Caco-2 (cell line): ENCODE measurements at regions of chr14 and their contacts with region 1.

Region 1: GRCh38 chr14:55416866-55417265 is 5.2 kb upstream of the ATG14 start:
- DNase-seq: peak in 1 of 2 experiments; percentile 33
- H3K4me3 ChIP-seq: no peak overlapping the region
- H3K4me3 Mint-ChIP-seq: no peak overlapping the region
- H3K27ac Mint-ChIP-seq: no peak overlapping the region
- H3K4me1 ChIP-seq: peaks cover 6% of the 10 kb centered on the region; the same call in 1 of the 2 replicates
- H3K4me1 Mint-ChIP-seq: no peaks in the 10 kb centered on the region
- H3K27me3 ChIP-seq: no peaks in the 10 kb centered on the region
- H3K27me3 Mint-ChIP-seq: no peaks in the 10 kb centered on the region
- CTCF ChIP-seq: peak; percentile 22 to 51

Region 2: GRCh38 chr14:55301437-55302121 is 115.3 kb before region 1 on chr14:
- CTCF ChIA-PET with region 1: interaction called, 11 read pairs
- POLR2A ChIA-PET with region 1: no interaction called
- intact Hi-C with region 1: no loop called
- DNase-seq: no peak
- H3K4me3 ChIP-seq: no peak overlapping the region
- H3K4me3 Mint-ChIP-seq: no peak overlapping the region
- H3K27ac Mint-ChIP-seq: peak overlapping the region; percentile 48
- H3K4me1 ChIP-seq: peaks cover 13% of the 10 kb centered on the region
- H3K4me1 Mint-ChIP-seq: peaks cover 21% of the 10 kb centered on the region
- H3K27me3 ChIP-seq: no peaks in the 10 kb centered on the region
- H3K27me3 Mint-ChIP-seq: no peaks in the 10 kb centered on the region
- CTCF ChIP-seq: no peak

Region 3: GRCh38 chr14:55404173-55404854 is 12.6 kb before region 1 on chr14:
- CTCF ChIA-PET with region 1: no interaction called
- POLR2A ChIA-PET with region 1: no interaction called
- intact Hi-C with region 1: no loop called
- DNase-seq: no peak
- H3K4me3 ChIP-seq: no peak overlapping the region
- H3K4me3 Mint-ChIP-seq: no peak overlapping the region
- H3K27ac Mint-ChIP-seq: no peak overlapping the region
- H3K4me1 ChIP-seq: no peaks in the 10 kb centered on the region
- H3K4me1 Mint-ChIP-seq: peaks cover under 1% of the 10 kb centered on the region
- H3K27me3 ChIP-seq: no peaks in the 10 kb centered on the region
- H3K27me3 Mint-ChIP-seq: no peaks in the 10 kb centered on the region
- CTCF ChIP-seq: no peak

Region 4: GRCh38 chr14:55470025-55470424 is 53.2 kb after region 1 on chr14:
- CTCF ChIA-PET with region 1: no interaction called
- POLR2A ChIA-PET with region 1: no interaction called
- intact Hi-C with region 1: no loop called
- DNase-seq: no peak
- H3K4me3 ChIP-seq: no peak overlapping the region
- H3K4me3 Mint-ChIP-seq: no peak overlapping the region
- H3K27ac Mint-ChIP-seq: no peak overlapping the region
- H3K4me1 ChIP-seq: no peaks in the 10 kb centered on the region
- H3K4me1 Mint-ChIP-seq: no peaks in the 10 kb centered on the region
- H3K27me3 ChIP-seq: no peaks in the 10 kb centered on the region
- H3K27me3 Mint-ChIP-seq: no peaks in the 10 kb centered on the region
- CTCF ChIP-seq: no peak